ENCODE measurements at regions of chr17 and their contacts with region 1.

Region 1: GRCh38 chr17:56592487-56593085 is 913 bp upstream of the NOG start:
- DNase-seq: peak; percentile 58 to 85 (median 77)
- H3K4me3 ChIP-seq: peak overlapping the region; percentile 63 to 83 (median 78)
- H3K27ac ChIP-seq: no peak overlapping the region
- H3K4me1 ChIP-seq: peaks cover 6 to 41% (median 28%) of the 10 kb centered on the region in 4 experiments
- H3K27me3 ChIP-seq: no peaks in the 10 kb centered on the region

Region 2: DNA sequence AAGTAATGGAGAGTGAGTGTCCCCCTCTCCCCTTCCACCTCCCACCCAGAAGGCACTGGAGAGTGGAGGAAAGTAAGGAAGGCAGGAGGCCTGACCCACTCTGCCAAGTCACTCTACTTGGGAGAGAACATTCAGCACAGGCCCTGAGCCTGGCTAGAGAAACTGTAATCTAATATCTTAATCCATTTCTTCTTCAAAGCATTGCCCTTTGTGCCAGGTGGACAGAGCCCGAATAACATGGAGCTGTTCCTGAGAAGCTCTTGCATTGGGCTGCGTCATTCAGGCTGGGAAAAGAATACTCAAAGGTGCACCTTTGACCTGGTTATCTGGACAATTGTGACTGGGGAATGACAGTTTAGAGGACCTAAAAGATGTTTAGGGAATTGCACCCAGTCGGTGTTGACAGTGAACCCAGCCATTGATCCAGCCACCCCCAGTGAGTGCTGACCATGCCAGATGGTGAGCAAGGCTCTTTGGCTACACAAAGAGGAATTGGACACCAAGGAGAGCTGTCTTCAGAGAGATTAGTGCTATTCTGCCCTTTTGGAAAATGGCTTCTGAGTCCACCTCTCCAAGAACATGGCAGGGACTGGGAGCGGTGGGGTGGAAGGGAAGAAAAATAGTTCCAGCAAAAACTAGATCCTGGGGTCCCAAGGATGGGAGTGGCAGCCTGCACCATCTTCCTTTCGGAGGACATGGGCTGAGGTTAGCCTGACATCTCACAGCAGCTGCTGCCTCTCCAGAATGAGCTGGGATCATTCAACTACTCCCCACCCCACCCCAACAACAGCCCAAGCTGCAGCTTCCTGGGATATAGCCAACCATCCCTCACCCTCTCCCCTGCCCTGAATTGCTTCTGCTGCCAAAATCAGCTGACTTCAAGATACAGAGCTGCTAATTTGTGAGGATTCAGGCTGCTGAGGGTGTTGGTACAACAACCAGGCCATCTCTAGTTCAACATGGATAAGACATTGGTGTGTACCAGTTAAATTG is 10.7 kb before region 1 on chr17:
- CTCF ChIA-PET with region 1: interaction called, 10 read pairs
- POLR2A ChIA-PET with region 1: no interaction called
- DNase-seq: no peak
- H3K4me3 ChIP-seq: no peak overlapping the region
- H3K27ac ChIP-seq: no peak overlapping the region
- H3K4me1 ChIP-seq: peaks cover 0 to 9% (median 0%) of the 10 kb centered on the region in 4 experiments
- H3K27me3 ChIP-seq: no peaks in the 10 kb centered on the region

Region 3: GRCh38 chr17:56653877-56654276 is 61.3 kb after region 1 on chr17:
- CTCF ChIA-PET with region 1: interaction called, 11 read pairs
- POLR2A ChIA-PET with region 1: no interaction called
- DNase-seq: peak; percentile 81 to 90 (median 84)
- H3K4me3 ChIP-seq: no peak overlapping the region
- H3K27ac ChIP-seq: no peak overlapping the region
- H3K4me1 ChIP-seq: peaks cover 9 to 25% (median 12%) of the 10 kb centered on the region in 4 experiments
- H3K27me3 ChIP-seq: no peaks in the 10 kb centered on the region

Region 4: DNA sequence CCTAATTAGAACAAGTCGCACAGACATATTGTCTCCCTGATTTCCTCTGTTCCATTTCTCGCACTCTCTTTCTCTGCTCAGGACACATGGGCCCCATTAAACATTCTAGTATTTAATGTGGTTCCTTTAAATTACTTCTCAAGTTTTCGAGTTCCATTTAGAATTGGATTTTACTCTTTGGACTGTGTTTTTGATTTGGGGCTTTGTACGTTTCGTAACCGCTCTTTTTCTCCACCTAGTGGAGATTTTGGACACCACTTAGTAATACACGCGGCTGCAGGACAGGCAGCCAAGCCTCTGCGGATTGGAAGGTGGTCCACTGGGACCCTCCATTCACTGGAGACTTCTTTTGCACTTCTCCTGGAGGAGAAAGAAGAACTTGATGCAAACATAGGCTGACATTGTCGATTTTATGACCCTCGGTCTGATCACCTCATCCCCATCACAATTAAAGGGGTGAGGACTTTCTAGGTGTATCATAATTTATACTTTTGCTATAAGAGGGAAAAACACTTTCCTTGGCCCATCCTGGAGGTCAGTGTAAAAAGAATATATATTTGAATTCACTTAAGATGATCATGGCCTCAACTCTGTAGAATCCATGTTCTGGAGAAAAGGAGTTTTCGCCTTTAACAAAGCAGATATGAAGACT is 86.7 kb after region 1 on chr17:
- CTCF ChIA-PET with region 1: interaction called, 16 read pairs
- POLR2A ChIA-PET with region 1: interaction called, 3 read pairs
- DNase-seq: peak; percentile 53 to 69 (median 63)
- H3K4me3 ChIP-seq: peak overlapping the region in 6 of 7 experiments; percentile 35 to 72 (median 50)
- H3K27ac ChIP-seq: no peak overlapping the region
- H3K4me1 ChIP-seq: peaks cover 36 to 72% (median 60%) of the 10 kb centered on the region in 4 experiments
- H3K27me3 ChIP-seq: peaks cover 0 to 11% (median 5%) of the 10 kb centered on the region in 5 experiments

Region 5: DNA sequence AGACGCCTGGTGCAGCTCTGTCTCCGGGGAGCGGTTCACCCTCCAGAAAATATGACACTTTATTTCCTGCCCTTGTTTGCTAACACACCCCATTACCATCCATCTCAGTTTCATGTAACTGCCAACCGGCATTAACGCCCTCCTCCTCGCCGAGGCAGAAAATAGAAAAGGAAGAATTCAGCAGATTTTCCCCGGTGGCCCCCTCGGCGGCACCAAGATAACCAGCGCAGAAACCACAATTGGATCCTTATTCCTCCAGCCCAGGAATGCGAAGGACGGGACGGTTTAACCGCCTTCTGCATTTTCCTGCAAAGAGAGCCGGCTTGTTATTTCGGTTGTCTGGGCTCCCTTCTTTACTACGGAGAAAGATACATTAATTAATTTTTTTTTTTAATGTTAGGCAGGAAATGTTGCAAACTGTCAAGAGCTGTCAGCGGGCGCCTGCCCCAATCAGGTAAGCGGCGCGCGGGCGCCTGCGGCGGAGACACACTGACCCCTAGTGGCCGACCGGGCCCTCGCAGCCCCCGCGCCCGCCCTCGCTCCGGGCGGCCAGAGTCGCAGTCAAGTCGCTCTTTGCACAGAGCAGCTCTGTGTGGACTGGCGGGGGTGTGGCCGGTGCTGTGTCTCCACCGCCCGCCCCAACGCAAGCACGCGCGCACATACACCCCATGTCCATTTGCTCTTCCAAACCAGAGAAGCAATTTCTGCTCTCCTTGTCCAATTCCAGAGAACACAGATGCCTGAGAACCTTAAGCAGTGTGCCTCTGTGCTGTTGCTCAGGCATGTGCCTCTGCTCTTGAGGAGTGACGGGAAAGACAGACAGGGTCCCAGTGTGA is 187.5 kb after region 1 on chr17:
- CTCF ChIA-PET with region 1: interaction called, 37 read pairs
- POLR2A ChIA-PET with region 1: interaction called, 3 read pairs
- DNase-seq: peak; percentile 91 to 97 (median 95)
- H3K4me3 ChIP-seq: peak overlapping the region in 6 of 7 experiments; percentile 40 to 74 (median 66)
- H3K27ac ChIP-seq: peak overlapping the region; percentile 65 to 93
- H3K4me1 ChIP-seq: peaks cover 14 to 70% (median 63%) of the 10 kb centered on the region in 4 experiments
- H3K27me3 ChIP-seq: no peaks in the 10 kb centered on the region

Measured in common myeloid progenitor, CD34-positive (primary cell).